Heart left ventricle (tissue), 16 donors: ENCODE measurements at regions of chr14 and their contacts with region 1.

Region 1: GRCh38 chr14:21455911-21456667 is at the start of gene CHD8:
- DNase-seq: peak; percentile 99 to 100 (median 100)
- ATAC-seq: peak; percentile 100
- H3K4me3 ChIP-seq: peak within 1 kb of the TSS; percentile 64 to 97 (median 85)
- H3K27ac ChIP-seq: peak within 1 kb of the TSS; percentile 91 to 99 (median 95)
- H3K4me1 ChIP-seq: peaks cover 0 to 33% (median 15%) of the 10 kb centered on the region in 12 donors
- H3K27me3 ChIP-seq: no peaks in the 10 kb centered on the region
- CTCF ChIP-seq: peak; percentile 44 to 81 (median 70)
- POLR2A ChIP-seq: peak in 1 of 2 donors; percentile 46
- total RNA-seq, gene CHD8: 24.7 to 56.9 (median 42.3) TPM

Region 2: DNA sequence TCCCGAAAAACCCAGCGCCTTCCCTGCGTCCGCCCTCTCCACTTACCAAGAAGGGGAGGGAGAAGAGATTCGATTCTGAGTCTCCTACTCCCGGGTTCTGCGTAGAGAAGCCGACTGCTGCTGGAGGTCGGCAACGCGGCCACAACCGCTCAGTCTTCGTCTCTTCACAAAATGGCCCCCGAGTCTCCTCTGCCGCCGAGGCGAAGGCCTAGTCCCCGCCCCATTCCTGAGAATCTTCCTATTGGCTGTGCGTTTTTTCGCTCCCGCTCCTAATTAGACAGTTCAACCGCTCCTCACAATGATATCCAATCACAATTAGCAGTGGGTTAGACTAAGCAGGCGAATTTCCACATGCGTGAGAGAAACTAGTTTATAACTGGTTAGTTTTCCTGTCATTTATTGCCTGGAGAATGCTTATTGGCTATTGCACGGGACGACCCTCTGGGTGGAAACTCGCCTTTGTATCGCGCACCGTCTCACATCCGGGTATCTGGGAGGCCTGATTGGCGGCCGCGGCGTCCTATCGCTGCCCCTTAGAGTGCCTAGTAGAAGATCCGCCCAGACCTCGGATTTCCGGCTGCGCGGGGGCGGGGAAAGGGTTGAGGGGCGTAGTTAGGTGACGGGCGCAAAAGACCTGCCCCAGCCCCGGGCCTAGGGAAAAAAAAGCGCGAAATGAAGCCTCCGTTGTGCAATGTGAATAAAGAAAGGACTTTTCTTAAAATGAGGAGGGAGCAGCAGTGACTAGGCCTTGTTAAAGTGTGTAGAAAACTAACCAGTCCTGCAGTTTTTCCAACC is 186.6 kb before region 1 on chr14 and contains the start of gene HNRNPC:
- intact Hi-C with region 1: loop called in 1 of 10 experiments (anchors 5 kb)
- DNase-seq: peak; percentile 100
- ATAC-seq: peak; percentile 97 to 99 (median 98)
- H3K4me3 ChIP-seq: peak within 1 kb of the TSS; percentile 58 to 99 (median 82)
- H3K27ac ChIP-seq: peak within 1 kb of the TSS; percentile 81 to 98 (median 94)
- H3K4me1 ChIP-seq: peaks cover 4 to 51% (median 36%) of the 10 kb centered on the region in 12 donors
- H3K27me3 ChIP-seq: no peaks in the 10 kb centered on the region
- CTCF ChIP-seq: no peak
- POLR2A ChIP-seq: peak in 1 of 2 donors; percentile 88
- total RNA-seq, gene HNRNPC: 201 to 289 (median 249) TPM

Region 3: GRCh38 chr14:21383848-21384493 is 72.1 kb before region 1 on chr14 and contains the start of gene SUPT16H:
- intact Hi-C with region 1: loop called in 1 of 10 experiments (anchors 1 kb)
- DNase-seq: peak; percentile 95 to 98 (median 97)
- ATAC-seq: peak; percentile 98 to 99 (median 98)
- H3K4me3 ChIP-seq: peak within 1 kb of the TSS; percentile 63 to 97 (median 71)
- H3K27ac ChIP-seq: peak within 1 kb of the TSS; percentile 29 to 97 (median 90)
- H3K4me1 ChIP-seq: peaks cover 0 to 48% (median 29%) of the 10 kb centered on the region in 12 donors
- H3K27me3 ChIP-seq: no peaks in the 10 kb centered on the region
- CTCF ChIP-seq: peak in 1 of 12 donors; percentile 12
- POLR2A ChIP-seq: no peak
- total RNA-seq, gene SUPT16H: 25.1 to 38.1 (median 29.6) TPM

Region 4: DNA sequence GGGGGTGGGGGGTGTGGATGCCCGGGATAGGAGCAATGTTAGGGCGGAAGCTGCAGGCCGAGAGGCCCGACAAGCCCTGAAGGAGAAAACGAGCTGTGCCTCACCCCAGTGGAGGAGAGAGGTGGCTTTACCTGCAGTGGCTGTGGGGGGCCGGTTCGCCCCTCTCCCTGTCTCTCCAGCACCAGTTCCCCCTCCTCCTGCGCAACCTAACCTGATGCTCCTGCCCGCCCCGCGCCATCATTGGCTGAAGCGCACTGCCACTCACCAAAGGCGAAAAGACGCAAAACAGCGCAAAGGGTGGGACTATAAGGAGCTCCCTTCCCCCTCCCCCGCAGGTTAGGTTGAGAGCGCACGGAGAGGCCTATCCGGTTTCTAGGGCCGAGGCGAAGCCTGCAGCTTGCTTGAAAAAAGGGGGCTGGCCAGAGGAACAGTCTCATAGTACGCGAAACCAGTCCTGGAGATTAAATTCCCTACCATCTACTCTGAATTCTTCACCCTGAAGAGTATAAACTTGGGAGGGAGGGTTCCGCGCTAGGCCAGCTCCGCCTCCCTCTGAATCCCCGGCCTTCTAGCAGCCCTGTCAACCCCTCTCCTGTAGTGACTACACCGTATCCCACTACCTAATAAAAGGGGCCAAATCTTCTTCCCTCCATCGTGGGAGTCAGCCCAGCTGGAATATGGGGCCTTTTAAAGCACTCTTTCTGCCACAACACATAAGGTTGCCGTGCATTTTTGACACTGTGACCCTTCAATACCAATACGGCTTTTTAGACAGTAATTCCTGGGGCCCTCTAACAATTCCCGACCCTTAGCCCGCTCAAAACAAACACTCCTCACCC is 18.8 kb before region 1 on chr14:
- intact Hi-C with region 1: loop called in 7 of 10 experiments (anchors 1 to 2 kb)
- DNase-seq: peak; percentile 99 to 100 (median 99)
- ATAC-seq: peak; percentile 99 to 100 (median 100)
- H3K4me3 ChIP-seq: peak overlapping the region; percentile 47 to 96 (median 86)
- H3K27ac ChIP-seq: peak overlapping the region; percentile 83 to 95 (median 90)
- H3K4me1 ChIP-seq: peaks cover 0 to 39% (median 23%) of the 10 kb centered on the region in 12 donors
- H3K27me3 ChIP-seq: no peaks in the 10 kb centered on the region
- CTCF ChIP-seq: no peak
- POLR2A ChIP-seq: peak in 1 of 2 donors; percentile 77

Region 5: GRCh38 chr14:21476925-21477681 is 21.0 kb after region 1 on chr14 and contains the starts of genes RAB2B and TOX4:
- intact Hi-C with region 1: loop called in 5 of 10 experiments (anchors 1 to 2 kb)
- DNase-seq: peak; percentile 95 to 97 (median 97)
- ATAC-seq: peak; percentile 99 to 100 (median 100)
- H3K4me3 ChIP-seq: peak within 1 kb of the TSS; percentile 59 to 98 (median 84)
- H3K27ac ChIP-seq: peak within 1 kb of the TSS; percentile 14 to 90 (median 84)
- H3K4me1 ChIP-seq: peaks cover 7 to 36% (median 19%) of the 10 kb centered on the region in 12 donors
- H3K27me3 ChIP-seq: no peaks in the 10 kb centered on the region
- CTCF ChIP-seq: peak; percentile 86 to 99 (median 94)
- POLR2A ChIP-seq: peak in 1 of 2 donors; percentile 77
- total RNA-seq, gene RAB2B: 13.3 to 24.5 (median 17.2) TPM
- total RNA-seq, gene TOX4: 51.1 to 100 (median 87.4) TPM

Region 6: DNA sequence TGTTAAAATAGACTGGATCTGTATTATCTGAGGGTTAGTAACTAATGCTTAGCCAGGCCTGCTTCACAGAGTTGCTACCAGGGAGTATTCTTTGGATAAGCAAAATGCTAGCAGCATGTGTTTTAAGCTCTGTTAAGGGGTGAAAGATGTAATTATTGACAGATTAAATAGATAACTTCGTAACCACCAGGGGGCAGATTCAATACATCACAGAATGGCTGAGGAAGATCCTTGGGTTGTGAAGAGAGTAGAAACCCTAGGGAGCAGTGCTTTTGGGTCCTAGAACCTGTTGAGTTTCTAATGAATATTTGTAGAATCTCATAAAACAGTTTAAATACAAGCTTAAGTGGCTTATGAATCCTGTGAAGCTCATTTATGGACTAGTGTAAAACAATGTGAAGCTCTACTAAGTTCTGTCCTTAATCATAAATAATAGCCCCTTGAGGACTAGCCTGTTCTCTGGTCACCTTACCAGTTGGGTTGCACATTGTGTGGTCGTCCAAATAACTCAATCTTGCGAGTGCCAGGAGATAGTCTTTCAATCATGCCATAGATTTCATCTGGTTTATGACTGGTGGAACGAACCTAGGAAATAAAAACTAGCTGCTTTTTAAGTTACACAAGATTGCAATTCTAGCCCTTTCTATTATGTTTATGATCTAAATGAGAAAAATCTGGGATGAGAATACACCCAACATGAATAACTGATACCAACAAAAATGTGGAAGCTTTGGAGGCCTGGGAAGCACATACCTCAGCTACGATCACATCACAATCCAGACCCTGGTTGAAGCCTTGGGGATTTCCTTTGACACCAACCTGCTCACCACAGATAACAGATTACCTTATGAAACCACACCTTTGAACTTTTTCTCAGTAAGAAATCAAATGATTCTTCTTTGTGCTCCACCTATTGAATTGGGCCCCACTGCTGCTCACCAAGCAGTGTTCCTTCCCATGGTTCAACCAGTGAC is 42.8 kb after region 1 on chr14:
- intact Hi-C with region 1: no loop called
- DNase-seq: no peak
- ATAC-seq: peak in 1 of 4 donors; percentile 30
- H3K4me3 ChIP-seq: no peak overlapping the region
- H3K27ac ChIP-seq: no peak overlapping the region
- H3K4me1 ChIP-seq: no peaks in the 10 kb centered on the region
- H3K27me3 ChIP-seq: no peaks in the 10 kb centered on the region
- CTCF ChIP-seq: peak in 10 of 12 donors; percentile 19 to 59 (median 44)
- POLR2A ChIP-seq: no peak

Region 7: DNA sequence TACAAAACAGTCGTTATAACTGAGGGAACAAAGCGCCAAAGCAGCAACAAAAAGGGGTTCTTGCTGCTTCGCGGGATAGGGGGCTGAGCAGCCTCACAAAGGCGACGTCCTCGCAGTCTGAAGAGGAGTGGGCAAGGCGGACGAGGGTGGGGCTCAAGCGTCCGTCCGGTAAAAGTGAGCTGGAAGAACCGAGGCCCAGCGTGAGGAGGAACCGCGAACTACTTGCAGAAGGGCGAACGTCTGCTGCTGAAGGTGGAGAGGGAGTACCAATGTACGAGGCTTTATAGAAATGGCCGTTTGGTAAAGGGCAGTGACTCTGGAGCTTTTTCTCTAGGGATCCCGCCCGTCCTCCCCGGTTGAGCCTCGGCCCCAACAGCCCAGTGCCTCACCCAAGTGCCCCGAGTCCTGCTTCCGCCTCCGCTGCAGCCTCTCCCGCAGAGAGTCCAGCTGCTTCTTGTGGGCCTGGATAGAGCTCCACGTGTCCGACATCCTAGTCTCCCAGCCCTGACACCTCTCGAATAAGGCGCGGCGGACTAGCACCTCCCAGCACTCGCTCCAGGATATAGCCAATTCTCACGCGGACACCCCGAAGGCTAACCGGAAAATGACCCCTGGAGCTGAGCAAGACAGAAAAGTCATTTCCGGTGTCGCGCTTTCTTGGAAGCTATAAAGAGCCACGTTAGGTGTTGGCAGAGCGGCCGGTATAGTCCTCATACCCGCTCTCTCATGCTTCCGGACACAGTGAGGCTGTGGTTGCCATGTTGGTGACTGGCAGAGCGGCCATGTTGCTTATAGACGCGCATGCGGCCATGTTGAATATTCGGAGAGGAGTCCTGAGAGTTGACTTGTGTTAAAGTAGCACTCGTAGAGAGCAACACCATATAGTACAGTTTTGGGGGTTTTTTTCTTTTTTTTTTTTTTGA is 54.9 kb after region 1 on chr14 and contains the start of gene METTL3:
- intact Hi-C with region 1: loop called in 1 of 10 experiments (anchors 1 kb)
- DNase-seq: peak; percentile 96 to 99 (median 98)
- ATAC-seq: peak; percentile 99 to 100 (median 100)
- H3K4me3 ChIP-seq: peak within 1 kb of the TSS; percentile 64 to 94 (median 82)
- H3K27ac ChIP-seq: peak within 1 kb of the TSS; percentile 55 to 92 (median 82)
- H3K4me1 ChIP-seq: peaks cover 0 to 28% (median 13%) of the 10 kb centered on the region in 12 donors
- H3K27me3 ChIP-seq: no peaks in the 10 kb centered on the region
- CTCF ChIP-seq: peak in 1 of 12 donors; percentile 7
- POLR2A ChIP-seq: no peak
- total RNA-seq, gene METTL3: 21.0 to 37.0 (median 25.2) TPM

Region 8: GRCh38 chr14:21557084-21557901 is 101.2 kb after region 1 on chr14:
- intact Hi-C with region 1: loop called in 4 of 10 experiments (anchors 1 to 10 kb)
- DNase-seq: peak in 4 of 5 donors; percentile 50 to 71 (median 62)
- ATAC-seq: peak; percentile 65 to 87 (median 74)
- H3K4me3 ChIP-seq: peak overlapping the region in 10 of 12 donors; percentile 23 to 50 (median 38)
- H3K27ac ChIP-seq: peak overlapping the region in 7 of 12 donors; percentile 8 to 79 (median 30)
- H3K4me1 ChIP-seq: peaks cover 0 to 18% (median 0%) of the 10 kb centered on the region in 12 donors
- H3K27me3 ChIP-seq: no peaks in the 10 kb centered on the region
- CTCF ChIP-seq: peak; percentile 60 to 83 (median 74)
- POLR2A ChIP-seq: no peak